ENCODE measurements at regions of chr9 and their contacts with region 1.

Region 1: DNA sequence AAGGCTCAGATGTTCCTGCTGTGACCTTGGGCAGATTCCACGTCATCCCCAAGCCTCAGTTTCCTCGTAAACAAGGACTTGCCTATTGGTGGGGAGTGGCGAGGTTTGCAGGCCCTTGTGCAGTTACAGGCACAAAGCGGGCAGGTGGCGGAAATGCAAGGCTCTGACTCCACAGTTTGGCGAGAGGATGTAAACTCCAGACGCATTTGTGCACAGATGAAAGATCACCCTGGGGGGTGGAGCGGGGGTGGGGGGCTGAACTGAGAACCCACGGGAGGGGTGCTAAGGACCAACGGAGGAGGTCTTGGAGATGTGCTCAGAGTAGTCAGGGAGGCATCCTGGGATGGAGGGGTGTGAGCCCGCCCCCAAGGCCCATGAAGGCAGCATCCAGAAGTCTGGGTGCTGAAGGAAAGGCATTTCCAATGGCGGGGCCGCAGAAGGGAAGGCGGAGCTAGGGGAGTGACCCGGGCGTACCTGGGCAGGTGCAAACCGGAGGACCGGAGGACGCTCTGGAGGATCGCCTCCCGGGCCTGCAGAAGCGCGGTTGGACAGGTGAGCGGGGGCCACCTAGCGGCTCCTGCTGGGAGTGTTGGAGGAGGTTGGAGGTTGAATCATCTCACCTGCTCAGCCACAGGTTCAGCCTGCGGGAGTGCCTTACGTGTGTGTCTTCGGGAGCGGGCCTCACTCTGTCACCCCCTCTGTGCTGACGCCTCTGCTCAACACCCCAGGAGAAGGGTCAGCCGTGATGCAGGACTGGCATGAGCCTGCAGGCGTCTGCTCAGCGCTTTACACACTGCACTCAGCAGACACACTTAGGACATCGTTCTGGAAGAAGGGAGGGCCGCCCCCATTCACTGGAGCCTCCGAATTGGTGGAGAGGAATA is 1.9 kb upstream of the FIBCD1 start:
- DNase-seq: peak; percentile 96
- H3K4me3 ChIP-seq: no peak overlapping the region
- H3K27ac ChIP-seq: no peak overlapping the region
- H3K4me1 ChIP-seq: peaks cover 4% of the 10 kb centered on the region
- H3K27me3 ChIP-seq: peaks cover 34% of the 10 kb centered on the region
- CTCF ChIP-seq: peak; percentile 87

Region 2: DNA sequence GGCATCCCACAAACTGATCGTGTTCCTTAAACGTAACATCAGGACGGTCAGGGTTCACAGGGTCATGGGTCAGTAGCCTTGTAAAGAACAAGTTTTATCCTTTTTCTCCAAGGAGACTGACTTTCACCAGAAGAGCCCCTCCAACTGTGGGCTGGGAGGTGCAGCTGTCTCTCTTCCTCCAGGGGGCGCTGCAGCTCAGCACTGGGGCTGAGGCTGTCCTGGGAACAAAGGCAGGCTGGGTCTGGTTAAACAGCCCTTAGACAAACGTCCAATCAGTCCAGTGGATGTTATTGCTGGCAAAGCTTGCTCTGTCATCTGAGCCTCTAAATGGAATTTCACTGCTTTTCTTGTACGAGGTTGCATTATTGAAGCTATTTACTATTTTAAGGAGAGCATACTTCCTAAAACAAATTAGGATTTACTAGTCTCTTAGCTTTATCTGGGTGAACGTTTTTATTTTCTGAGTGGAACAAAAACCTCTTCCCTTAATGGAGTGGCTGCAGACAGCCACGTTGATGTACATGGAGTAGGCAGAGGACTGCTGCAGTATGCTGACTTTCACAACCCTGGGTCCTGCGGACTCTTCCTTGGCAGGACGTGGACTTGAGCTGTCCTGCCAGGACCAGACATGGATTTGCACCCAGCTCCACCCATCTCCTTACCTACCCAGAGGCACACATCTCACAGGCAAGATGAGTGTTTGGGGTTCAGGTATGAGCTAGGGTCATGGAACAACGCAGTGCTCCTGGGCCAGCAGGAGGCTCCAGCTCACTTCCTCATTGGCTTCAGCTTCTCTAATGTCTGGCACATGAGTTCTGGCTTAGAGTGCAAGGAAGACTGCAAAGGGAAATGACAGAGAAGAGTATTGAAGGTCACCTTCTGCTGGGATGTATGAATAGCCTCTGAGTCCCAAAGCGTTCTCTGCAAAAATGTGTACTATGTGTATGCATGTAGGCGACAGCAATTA is 239.6 kb before region 1 on chr9:
- intact Hi-C with region 1: loop called (anchors 5 kb)
- DNase-seq: peak; percentile 82
- H3K4me3 ChIP-seq: no peak overlapping the region
- H3K27ac ChIP-seq: no peak overlapping the region
- H3K4me1 ChIP-seq: no peaks in the 10 kb centered on the region
- H3K27me3 ChIP-seq: no peaks in the 10 kb centered on the region
- CTCF ChIP-seq: peak; percentile 97

Region 3: GRCh38 chr9:130770679-130771442 is 170.1 kb before region 1 on chr9:
- intact Hi-C with region 1: loop called (anchors 5 kb)
- DNase-seq: no peak
- H3K4me3 ChIP-seq: no peak overlapping the region
- H3K27ac ChIP-seq: no peak overlapping the region
- H3K4me1 ChIP-seq: peaks cover 11% of the 10 kb centered on the region
- H3K27me3 ChIP-seq: no peaks in the 10 kb centered on the region
- CTCF ChIP-seq: peak; percentile 64

Region 4: GRCh38 chr9:130780865-130781504 is 159.9 kb before region 1 on chr9:
- intact Hi-C with region 1: no loop called
- DNase-seq: no peak
- H3K4me3 ChIP-seq: no peak overlapping the region
- H3K27ac ChIP-seq: peak overlapping the region; percentile 65
- H3K4me1 ChIP-seq: no peaks in the 10 kb centered on the region
- H3K27me3 ChIP-seq: no peaks in the 10 kb centered on the region
- CTCF ChIP-seq: no peak

Region 5: DNA sequence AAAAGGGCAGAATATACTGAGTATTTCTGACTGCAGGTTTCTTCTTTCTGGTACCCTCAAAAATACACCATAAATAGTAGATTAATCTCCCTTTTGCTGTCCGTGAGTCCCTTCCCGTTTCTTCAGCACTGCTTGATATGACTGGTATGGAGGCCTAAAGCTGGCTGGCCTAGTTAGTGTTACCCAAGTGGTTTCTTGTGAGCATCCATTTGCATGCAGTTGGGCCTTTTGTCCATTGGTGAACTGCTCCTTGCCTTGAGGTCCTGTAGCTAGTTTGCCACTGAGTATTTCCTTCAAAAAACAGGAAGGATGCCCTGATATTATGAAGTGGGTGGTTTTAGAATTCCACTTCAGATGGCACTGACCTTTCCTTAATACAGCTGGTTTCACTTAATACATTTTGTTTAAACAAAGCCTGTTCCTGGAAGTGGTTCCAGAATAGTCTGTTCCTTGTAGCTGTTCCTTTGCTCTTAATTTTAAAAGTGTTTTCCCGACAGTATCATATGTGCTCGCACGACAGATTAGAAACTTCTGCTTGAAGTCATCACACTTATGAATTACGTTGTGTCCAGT is 145.9 kb before region 1 on chr9:
- intact Hi-C with region 1: no loop called
- DNase-seq: no peak
- H3K4me3 ChIP-seq: no peak overlapping the region
- H3K27ac ChIP-seq: peak overlapping the region; percentile 31
- H3K4me1 ChIP-seq: no peaks in the 10 kb centered on the region
- H3K27me3 ChIP-seq: no peaks in the 10 kb centered on the region
- CTCF ChIP-seq: no peak

Region 6: DNA sequence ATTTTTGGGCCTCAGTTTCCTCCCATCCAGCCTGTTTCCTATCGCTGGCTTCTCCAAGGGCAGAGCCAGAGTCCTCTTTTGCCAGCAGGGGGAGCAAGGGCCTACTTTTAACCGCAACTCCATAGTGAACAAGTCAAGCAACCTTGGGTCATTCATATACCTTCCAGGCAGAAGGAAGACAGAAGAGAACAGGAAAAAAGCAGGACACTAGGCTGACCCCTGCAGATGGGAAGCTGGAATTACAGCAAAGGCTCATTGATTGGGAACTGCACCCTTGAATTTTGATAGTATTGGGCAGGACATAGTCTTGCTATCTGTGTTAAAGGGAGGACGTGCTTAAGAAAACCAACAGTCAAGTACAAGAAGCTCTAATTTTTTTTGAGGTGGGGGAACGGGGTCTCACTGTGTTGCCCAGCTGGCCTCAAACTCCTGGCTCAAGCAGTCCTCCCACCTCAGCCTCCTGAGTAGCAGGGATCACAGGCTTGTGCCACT is 74.4 kb before region 1 on chr9:
- intact Hi-C with region 1: loop called (anchors 5 kb)
- DNase-seq: peak; percentile 92
- H3K4me3 ChIP-seq: no peak overlapping the region
- H3K27ac ChIP-seq: no peak overlapping the region
- H3K4me1 ChIP-seq: no peaks in the 10 kb centered on the region
- H3K27me3 ChIP-seq: no peaks in the 10 kb centered on the region
- CTCF ChIP-seq: peak; percentile 91

Region 7: DNA sequence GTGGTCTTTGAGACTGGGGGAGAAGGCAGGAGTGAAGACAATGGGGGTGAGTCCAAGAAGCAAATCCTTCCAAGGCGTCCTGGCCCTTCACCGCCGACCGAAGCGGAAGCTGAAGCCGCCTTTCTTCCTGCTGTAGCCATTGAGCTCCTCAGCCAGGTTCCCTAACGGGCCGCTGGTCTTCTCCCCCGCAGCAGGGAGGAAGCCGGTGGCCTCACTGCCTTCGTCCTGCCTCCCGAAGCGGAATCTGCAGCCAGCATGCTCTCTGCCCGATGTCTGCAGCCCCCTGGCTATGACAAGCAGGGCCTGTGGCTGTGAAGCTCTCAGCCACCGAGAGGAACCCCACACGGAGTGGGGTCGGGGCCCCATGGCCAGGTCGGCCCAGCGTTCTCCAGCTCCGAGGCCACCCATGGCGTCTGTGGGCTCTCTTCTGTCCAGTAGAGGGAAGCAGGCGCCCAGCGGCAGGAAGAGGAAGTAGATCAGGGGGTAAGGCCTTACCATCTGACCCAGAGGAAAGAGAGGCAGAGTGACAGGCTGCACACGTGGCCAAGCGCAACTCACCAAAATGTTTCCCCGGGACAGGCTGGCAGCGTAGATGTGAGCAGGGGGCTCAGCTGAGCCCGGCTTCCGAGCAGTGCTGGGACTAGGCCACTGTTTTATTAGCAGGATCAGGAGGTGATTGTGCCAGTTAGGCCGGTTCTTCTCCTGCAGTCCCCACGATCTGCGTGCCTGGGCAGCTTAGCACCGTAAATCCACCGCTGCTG is 47.4 kb before region 1 on chr9:
- intact Hi-C with region 1: loop called (anchors 5 kb)
- DNase-seq: no peak
- H3K4me3 ChIP-seq: no peak overlapping the region
- H3K27ac ChIP-seq: no peak overlapping the region
- H3K4me1 ChIP-seq: no peaks in the 10 kb centered on the region
- H3K27me3 ChIP-seq: no peaks in the 10 kb centered on the region
- CTCF ChIP-seq: peak; percentile 35

Measured in colonic mucosa (tissue), 4 donors.